ENCODE measurements at regions of chr6 and their contacts with region 1.

Region 1: DNA sequence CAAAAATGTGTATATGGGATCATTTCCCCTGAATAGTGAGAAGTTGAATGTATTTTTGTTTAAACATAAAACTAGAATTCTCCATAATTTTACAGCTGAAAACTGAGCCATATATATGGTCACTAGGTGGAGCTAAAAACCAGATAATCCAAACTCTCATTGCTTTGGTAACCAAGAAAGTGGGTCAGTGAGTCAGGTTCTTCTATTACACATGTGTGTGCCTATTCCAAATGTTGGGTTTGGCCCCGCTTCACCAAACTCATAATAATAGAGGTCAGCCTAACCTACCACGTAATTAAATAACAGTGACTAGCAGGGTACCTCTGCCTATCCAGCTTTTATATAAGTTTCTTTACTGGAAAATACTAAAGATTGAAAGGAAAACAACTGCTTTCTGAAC is 19.3 kb upstream of the RNGTT start:
- DNase-seq: no peak
- ATAC-seq: peak; percentile 67
- H3K4me3 Mint-ChIP-seq: no peak overlapping the region
- H3K27ac Mint-ChIP-seq: no peak overlapping the region
- H3K4me1 Mint-ChIP-seq: no peaks in the 10 kb centered on the region
- H3K27me3 Mint-ChIP-seq: peaks cover 61% of the 10 kb centered on the region
- CTCF ChIP-seq: peak; percentile 26; the same call in 1 of the 2 replicates

Region 2: GRCh38 chr6:89022798-89023197 is 40.1 kb after region 1 on chr6:
- CTCF ChIA-PET with region 1: no interaction called
- POLR2A ChIA-PET with region 1: no interaction called
- DNase-seq: no peak
- ATAC-seq: no peak
- H3K4me3 Mint-ChIP-seq: no peak overlapping the region
- H3K27ac Mint-ChIP-seq: no peak overlapping the region
- H3K4me1 Mint-ChIP-seq: peaks cover 24% of the 10 kb centered on the region
- H3K27me3 Mint-ChIP-seq: peaks cover 2% of the 10 kb centered on the region; the same call in 1 of the 2 replicates
- CTCF ChIP-seq: no peak

Region 3: GRCh38 chr6:89080542-89081422 is 98.1 kb after region 1 on chr6 and contains the start of gene PNRC1:
- CTCF ChIA-PET with region 1: interaction called, 31 read pairs
- POLR2A ChIA-PET with region 1: interaction called, 12 read pairs
- DNase-seq: peak; percentile 100
- ATAC-seq: peak; percentile 85
- H3K4me3 Mint-ChIP-seq: peak within 1 kb of the TSS; percentile 93
- H3K27ac Mint-ChIP-seq: peak within 1 kb of the TSS; percentile 99
- H3K4me1 Mint-ChIP-seq: peaks cover 47% of the 10 kb centered on the region
- H3K27me3 Mint-ChIP-seq: peaks cover 7% of the 10 kb centered on the region
- CTCF ChIP-seq: no peak
- total RNA-seq, gene PNRC1: 39.0 to 49.3 TPM (median 48.4 TPM) in 3 replicates

Region 4: GRCh38 chr6:89117211-89118108 is 134.7 kb after region 1 on chr6 and contains the start of gene SRSF12:
- CTCF ChIA-PET with region 1: interaction called, 21 read pairs
- POLR2A ChIA-PET with region 1: no interaction called
- DNase-seq: peak; percentile 62
- ATAC-seq: peak; percentile 85
- H3K4me3 Mint-ChIP-seq: peak within 1 kb of the TSS; percentile 74
- H3K27ac Mint-ChIP-seq: no peak within 1 kb of the TSS
- H3K4me1 Mint-ChIP-seq: peaks cover 9% of the 10 kb centered on the region
- H3K27me3 Mint-ChIP-seq: peaks cover 49% of the 10 kb centered on the region
- CTCF ChIP-seq: no peak
- total RNA-seq, gene SRSF12: 3.8 to 4.0 TPM (median 3.8 TPM) in 3 replicates

Region 5: DNA sequence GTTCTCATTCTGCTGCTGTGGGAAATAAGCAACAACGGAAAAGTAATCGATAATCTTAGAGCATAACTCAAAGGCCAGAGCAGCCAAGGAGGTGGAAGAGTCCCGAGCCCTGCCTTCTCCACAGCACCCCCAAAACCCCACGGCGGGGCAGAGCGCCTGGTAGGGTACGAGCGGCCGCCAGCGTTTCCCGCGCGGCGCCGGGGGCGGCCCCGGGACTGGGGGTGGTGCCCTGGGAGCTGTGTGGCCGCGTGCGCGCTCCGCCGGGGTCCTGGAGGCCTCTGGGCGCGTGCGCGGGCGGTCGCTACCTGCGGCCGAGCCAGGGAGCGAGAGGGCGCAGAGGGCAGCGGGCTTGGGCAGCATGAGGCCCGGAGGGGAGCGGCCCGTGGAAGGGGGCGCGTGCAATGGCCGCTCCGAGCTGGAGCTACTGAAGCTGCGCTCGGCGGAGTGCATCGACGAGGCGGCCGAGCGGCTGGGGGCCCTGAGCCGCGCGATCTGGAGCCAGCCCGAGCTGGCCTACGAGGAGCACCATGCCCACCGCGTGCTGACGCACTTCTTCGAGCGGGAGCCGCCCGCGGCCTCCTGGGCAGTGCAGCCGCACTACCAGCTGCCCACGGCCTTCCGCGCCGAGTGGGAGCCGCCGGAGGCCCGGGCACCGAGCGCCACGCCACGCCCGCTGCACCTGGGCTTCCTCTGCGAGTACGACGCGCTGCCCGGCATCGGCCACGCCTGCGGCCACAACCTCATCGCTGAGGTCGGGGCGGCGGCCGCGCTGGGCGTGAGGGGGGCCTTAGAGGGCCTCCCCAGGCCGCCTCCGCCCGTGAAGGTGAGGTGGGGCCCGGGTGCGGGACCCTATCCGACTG is 163.3 kb after region 1 on chr6 and contains the start of gene PM20D2:
- CTCF ChIA-PET with region 1: interaction called, 29 read pairs
- POLR2A ChIA-PET with region 1: no interaction called
- DNase-seq: peak; percentile 58
- ATAC-seq: peak; percentile 84
- H3K4me3 Mint-ChIP-seq: peak within 1 kb of the TSS; percentile 67
- H3K27ac Mint-ChIP-seq: no peak within 1 kb of the TSS
- H3K4me1 Mint-ChIP-seq: peaks cover 9% of the 10 kb centered on the region
- H3K27me3 Mint-ChIP-seq: peaks cover 76% of the 10 kb centered on the region
- CTCF ChIP-seq: no peak
- total RNA-seq, gene PM20D2: 4.8 to 5.1 TPM (median 4.9 TPM) in 3 replicates

Region 6: GRCh38 chr6:89154126-89154525 is 171.4 kb after region 1 on chr6:
- CTCF ChIA-PET with region 1: interaction called, 12 read pairs
- POLR2A ChIA-PET with region 1: no interaction called
- DNase-seq: no peak
- ATAC-seq: no peak
- H3K4me3 Mint-ChIP-seq: no peak overlapping the region
- H3K27ac Mint-ChIP-seq: no peak overlapping the region
- H3K4me1 Mint-ChIP-seq: no peaks in the 10 kb centered on the region
- H3K27me3 Mint-ChIP-seq: peaks cover 8% of the 10 kb centered on the region; the same call in 1 of the 2 replicates
- CTCF ChIP-seq: no peak

Region 7: GRCh38 chr6:89161326-89162046 is 178.8 kb after region 1 on chr6:
- CTCF ChIA-PET with region 1: interaction called, 11 read pairs
- POLR2A ChIA-PET with region 1: no interaction called
- DNase-seq: peak; percentile 30
- ATAC-seq: peak; percentile 100
- H3K4me3 Mint-ChIP-seq: no peak overlapping the region
- H3K27ac Mint-ChIP-seq: 0 out of 2 replicates have a peak overlapping the region, but pooled peaks have one; percentile 20
- H3K4me1 Mint-ChIP-seq: peaks cover 4% of the 10 kb centered on the region
- H3K27me3 Mint-ChIP-seq: no peaks in the 10 kb centered on the region
- CTCF ChIP-seq: no peak

Region 8: DNA sequence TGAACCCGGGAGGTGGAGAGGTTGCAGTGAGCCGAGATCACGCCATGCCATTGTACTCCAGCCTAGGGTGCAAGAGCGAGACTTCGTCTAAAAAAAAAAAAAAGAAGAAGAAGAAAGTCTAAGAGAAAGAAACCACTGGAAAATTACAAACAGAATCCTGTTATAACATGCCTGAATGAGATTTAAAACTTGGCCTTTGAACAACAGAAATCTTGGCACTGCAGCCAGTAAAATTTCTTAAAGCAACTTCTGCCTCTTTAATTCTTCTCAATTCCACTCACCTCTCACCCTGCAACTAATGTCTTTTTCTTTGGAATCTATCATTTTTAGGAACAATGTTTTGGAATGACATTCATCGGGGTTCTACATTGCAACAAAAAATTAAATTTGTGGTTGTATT is 189.4 kb after region 1 on chr6:
- CTCF ChIA-PET with region 1: no interaction called
- POLR2A ChIA-PET with region 1: no interaction called
- DNase-seq: no peak
- ATAC-seq: no peak
- H3K4me3 Mint-ChIP-seq: no peak overlapping the region
- H3K27ac Mint-ChIP-seq: no peak overlapping the region
- H3K4me1 Mint-ChIP-seq: no peaks in the 10 kb centered on the region
- H3K27me3 Mint-ChIP-seq: 0 out of 2 replicates have a peak, but pooled peaks cover 2% of the 10 kb centered on the region
- CTCF ChIP-seq: no peak

Region 9: GRCh38 chr6:89267918-89268317 is 285.2 kb after region 1 on chr6:
- CTCF ChIA-PET with region 1: no interaction called
- POLR2A ChIA-PET with region 1: interaction called, 12 read pairs
- DNase-seq: no peak
- ATAC-seq: no peak
- H3K4me3 Mint-ChIP-seq: no peak overlapping the region
- H3K27ac Mint-ChIP-seq: no peak overlapping the region
- H3K4me1 Mint-ChIP-seq: no peaks in the 10 kb centered on the region
- H3K27me3 Mint-ChIP-seq: no peaks in the 10 kb centered on the region; the same call in 1 of the 2 replicates
- CTCF ChIP-seq: no peak

Measured in WTC11 (cell line).